ENCODE measurements at regions of chr11 and their contacts with region 1.

Region 1: DNA sequence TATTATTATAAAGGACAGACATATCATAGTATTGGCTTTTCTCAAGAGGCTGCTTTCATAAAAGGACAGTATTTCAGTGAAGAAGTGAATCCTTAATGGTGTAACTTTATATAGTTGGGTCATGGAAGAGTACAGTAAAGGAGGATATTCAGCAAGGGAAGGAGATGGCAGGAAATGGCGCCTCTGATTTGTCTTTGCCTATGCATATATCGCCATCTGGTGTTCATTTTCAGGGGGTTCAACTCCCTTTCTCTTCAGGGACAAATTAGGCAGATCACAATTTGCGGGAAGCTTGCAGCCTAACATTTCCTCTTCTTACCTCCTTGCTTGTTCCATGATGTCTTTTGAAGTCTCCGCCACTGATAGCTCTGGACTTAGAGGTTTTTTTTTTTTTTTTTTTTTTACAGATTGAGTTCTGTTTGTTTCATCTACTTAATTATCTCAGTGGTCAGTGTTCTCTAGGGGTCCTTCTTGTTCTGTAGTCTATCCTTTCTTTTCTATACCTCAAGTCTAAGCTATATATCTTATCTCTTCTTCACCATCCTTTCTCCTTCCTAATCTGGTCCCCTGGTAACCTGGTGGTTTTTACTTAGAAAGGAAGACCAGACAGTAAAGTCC is 21.8 kb upstream of the RRM1 start:
- DNase-seq: no peak
- H3K4me3 ChIP-seq: no peak overlapping the region
- CTCF ChIP-seq: peak; percentile 72

Region 2: DNA sequence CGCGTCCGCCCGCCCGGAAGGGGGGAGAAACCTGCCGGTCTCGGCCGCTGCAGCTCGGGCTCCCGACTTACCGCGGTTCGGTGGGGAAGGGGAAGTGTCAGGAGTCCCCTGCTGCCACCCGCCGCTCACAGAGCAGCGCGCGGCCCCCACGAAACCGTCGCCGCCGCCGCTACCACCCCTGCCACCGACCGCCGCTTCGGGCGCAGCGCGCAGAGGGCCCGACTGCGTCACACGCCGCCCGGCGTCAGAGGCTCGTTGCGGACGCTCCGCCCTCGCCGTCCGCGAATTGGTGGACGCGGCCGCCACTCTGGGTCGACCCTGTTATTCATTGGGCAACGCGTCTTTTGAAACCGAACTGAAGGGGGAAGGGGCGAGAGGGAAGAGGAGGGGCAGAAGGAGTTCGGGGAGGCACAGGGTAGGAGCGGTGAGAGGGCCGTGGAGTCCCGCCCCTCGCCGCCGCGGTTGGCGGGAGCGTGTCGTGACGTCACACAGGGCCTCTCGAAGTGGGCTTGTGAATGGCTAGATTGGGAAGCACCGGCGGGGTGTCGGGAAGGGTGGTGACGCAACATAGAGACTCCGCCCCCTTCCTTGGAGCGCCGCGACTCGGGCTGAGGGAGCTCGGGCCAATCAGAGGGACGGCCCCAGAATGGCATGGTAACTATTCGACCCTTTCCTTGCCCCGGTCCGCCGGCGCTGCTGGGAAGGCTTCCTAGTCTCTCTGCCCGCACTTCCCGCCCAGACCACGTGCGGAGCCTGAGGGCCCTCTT is 275.3 kb before region 1 on chr11 and contains the start of gene NUP98:
- CTCF ChIA-PET with region 1: interaction called, 11 read pairs
- POLR2A ChIA-PET with region 1: interaction called, 3 read pairs
- DNase-seq: peak; percentile 99
- H3K4me3 ChIP-seq: peak within 1 kb of the TSS; percentile 97
- CTCF ChIP-seq: no peak

Region 3: DNA sequence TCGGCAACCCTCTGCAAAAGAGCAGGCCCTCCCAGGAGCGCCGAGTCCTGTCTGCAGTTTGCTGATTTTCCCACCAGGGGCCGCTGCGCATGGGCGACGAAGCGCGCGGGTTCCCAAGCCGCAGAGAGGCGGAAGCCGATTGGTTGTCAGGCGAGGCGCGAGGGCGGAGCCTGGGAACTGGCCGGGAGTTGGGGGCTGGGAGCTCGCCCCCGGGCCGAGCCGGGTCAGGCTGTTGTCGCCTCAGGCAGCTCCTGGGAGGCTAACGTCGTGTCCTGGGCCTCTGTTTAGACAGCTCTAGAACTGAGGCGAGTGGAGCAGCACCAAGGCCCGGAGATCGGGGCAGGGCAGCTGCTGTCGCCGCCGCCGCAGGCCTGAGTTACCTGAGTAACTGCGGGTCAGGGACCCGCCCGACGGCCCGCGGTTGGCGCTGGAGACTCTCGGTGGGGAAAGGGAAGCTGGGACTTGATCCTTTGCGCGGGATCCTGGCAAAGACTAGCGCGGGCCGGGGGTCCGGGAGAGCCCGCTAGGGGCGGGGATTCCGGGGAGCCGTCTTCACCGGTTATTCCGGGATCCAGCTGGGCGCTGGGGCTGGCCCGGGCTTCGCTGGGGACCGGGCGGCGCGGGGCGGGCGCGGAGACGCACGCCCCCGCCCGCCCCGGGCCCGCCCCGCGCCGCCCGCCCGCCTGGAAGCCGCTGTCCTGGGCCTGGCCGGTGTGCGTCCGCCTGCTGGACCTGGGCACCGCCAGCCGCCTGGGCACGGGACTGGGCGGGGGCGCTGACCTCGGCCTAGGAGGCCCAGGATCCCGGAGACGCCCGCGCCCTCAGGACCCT is 217.6 kb before region 1 on chr11 and contains the start of gene STIM1:
- CTCF ChIA-PET with region 1: interaction called, 1,868 read pairs
- POLR2A ChIA-PET with region 1: interaction called, 18 read pairs
- DNase-seq: peak; percentile 45
- H3K4me3 ChIP-seq: peak within 1 kb of the TSS; percentile 85
- CTCF ChIP-seq: peak; percentile 97

Region 4: DNA sequence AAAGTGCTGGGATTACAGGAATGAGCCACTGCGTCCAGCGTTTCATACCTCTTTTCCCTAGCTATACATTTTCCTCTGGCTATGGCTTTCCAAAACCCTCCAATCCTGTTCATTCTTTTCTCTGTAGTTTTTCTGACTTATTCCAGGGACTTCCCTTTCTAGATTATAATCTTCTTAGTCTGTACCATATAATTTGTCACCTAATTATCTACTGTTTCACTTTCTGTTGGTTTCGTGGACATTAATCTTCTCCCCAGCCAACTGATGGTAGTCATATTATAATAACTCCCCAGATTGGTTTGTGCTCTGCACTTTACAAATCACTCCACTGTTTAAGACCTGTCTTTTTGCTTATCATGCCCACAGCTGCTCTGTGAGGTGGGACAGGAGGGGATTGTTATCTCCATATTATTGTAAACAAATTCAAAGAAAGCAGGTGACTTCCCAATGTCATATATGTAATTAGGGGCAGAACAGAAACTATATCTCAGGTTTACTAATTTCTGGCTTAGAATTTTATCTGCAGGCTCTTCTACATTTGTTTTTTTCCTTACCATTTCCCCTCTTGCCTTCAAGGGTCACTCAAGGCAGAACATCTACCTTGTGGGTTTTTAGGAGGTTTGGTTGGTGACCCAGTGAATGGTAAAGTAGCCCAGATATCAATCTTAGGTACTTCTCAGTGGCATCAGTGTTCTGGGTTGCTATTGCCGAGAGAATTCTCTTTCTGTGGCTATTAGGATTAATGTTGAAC is 193.4 kb before region 1 on chr11:
- CTCF ChIA-PET with region 1: interaction called, 14 read pairs
- POLR2A ChIA-PET with region 1: no interaction called
- DNase-seq: no peak
- H3K4me3 ChIP-seq: no peak overlapping the region
- CTCF ChIP-seq: no peak

Region 5: DNA sequence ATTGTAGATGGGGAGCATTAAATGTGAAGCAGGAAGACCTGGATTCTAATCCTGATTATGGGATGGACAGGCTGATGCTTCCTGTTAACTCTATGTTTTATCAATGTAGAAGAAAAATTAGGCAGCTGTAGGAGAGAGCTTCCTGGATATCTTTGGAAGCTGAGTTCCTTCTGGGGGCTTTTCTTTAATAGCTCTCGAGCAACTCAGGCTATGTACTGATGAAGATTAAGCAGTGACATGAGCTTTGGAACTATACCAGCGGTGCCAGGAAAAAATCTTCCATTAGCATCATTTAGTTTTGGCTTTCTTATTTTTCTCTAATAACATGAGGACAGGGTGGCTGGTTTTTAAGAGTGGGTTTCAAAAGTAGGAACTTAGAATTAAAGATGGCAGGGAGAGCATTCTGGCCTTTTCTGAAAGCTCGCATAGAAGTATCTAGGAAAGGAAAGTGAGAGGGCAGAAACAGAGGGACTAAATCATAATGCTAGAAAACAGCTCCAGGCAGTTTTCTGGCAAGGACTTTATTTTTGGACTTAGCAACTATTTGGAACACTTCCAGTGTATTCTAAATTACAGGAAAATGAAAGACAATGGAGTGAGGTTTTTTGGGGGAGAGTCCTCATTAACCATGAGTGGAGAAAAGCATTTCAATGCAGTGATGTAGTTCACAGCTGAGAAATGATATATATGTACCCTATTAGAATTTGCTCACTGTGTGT is 47.4 kb before region 1 on chr11:
- CTCF ChIA-PET with region 1: interaction called, 15 read pairs
- POLR2A ChIA-PET with region 1: no interaction called
- DNase-seq: no peak
- H3K4me3 ChIP-seq: no peak overlapping the region
- CTCF ChIP-seq: no peak

Region 6: DNA sequence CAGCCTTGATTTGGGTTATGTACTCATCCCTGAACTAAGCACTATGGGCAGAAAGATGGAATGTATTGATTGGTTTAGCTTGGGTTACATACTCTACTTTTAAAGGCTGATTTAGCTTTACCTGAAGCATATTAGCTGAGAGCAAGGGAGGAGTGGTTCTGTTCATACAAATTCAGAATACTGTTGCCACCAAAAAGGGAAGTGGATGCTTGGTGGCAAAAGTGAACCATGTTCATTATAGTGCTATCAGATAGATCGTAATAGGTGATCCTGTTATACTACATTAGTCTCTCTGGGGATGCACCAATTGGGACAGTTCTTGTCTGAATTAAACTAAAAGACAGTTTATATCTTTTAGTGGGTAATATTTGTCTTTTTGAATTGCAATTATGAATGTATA is 22.6 kb before region 1 on chr11:
- CTCF ChIA-PET with region 1: interaction called, 29 read pairs
- POLR2A ChIA-PET with region 1: no interaction called
- DNase-seq: no peak
- H3K4me3 ChIP-seq: no peak overlapping the region
- CTCF ChIP-seq: no peak

Measured in AG04449 (cell line).